ENCODE measurements at regions of chr9 and their contacts with region 1.

Region 1: DNA sequence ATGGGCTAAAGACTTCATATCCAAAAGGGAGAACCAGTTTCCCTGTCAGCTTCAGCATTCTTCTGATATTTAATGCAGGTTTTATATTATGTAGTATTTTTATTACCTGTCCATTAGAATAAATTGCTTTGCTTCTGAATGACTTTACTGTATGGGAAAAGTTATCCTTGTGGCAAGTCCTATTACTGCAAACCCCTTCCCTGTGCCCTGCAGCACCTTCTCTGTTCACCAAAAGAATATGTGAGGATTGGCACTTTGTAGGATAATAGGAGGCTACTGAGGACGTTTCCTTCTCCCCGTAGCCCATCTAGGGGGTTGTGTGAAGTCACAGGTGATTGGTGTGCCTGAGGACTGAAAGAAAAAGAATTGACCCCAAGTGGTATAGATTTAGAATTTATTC is 296.1 kb downstream of the KDM4C start:
- DNase-seq: no peak
- H3K4me3 ChIP-seq: no peak overlapping the region
- H3K27ac ChIP-seq: no peak overlapping the region
- H3K4me1 ChIP-seq: peaks cover 0 to 20% (median 6%) of the 10 kb centered on the region in 4 experiments
- H3K27me3 ChIP-seq: no peaks in the 10 kb centered on the region

Region 2: DNA sequence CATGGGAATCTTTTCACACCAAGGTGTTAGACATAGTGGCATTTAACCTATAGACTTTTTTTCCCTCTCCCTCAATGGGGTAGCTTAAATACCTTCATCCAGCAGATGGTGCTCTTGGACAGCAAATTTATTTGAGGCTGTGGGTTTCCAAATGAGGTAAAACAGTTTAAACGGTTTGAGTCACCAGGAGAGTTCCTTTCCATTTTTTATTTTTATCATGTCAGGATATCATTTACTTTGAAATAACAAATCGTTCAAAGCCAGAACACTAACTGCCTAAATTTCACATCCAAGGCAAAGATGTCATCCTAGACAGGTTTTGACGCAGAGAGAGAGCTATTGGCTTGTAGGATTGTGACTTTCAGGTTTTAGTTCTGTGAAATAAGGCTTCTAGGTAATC is 226.5 kb before region 1 on chr9:
- CTCF ChIA-PET with region 1: interaction called, 13 read pairs
- POLR2A ChIA-PET with region 1: no interaction called
- DNase-seq: peak; percentile 61 to 82 (median 77)
- H3K4me3 ChIP-seq: no peak overlapping the region
- H3K27ac ChIP-seq: no peak overlapping the region
- H3K4me1 ChIP-seq: no peaks in the 10 kb centered on the region
- H3K27me3 ChIP-seq: no peaks in the 10 kb centered on the region

Region 3: DNA sequence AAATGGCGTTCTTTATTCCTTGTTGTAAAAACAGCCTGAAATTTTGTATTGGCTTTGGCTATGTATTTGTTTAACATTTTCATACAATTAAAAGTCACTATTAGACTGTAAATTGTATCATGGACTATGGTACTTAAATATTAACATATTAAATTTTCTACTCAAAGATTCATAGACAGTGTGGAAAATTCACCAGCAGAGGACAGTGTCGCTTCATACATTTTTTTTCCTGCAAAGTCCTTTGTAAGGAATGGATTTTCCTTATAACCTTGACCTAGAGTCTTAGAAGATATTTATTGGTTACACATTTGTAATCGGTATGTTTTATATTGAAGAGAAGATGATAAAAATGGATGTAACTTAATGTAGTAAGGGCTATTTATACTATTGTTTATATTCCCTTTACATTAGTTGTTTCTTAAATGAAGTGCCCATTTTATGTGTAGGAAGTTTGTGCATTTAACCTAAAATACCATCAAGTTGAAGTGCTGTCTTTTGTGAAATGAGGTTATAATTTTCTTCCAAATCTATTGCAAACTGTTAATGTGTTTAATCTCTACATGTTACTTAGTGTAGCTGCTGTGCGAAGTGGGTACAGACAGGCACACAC is 146.0 kb before region 1 on chr9:
- CTCF ChIA-PET with region 1: interaction called, 11 read pairs
- POLR2A ChIA-PET with region 1: no interaction called
- DNase-seq: peak in 2 of 3 donors; percentile 37 to 54
- H3K4me3 ChIP-seq: no peak overlapping the region
- H3K27ac ChIP-seq: no peak overlapping the region
- H3K4me1 ChIP-seq: peaks cover 0 to 7% (median 2%) of the 10 kb centered on the region in 4 experiments
- H3K27me3 ChIP-seq: no peaks in the 10 kb centered on the region

Region 4: GRCh38 chr9:6944093-6944551 is 109.8 kb before region 1 on chr9:
- CTCF ChIA-PET with region 1: interaction called, 11 read pairs
- POLR2A ChIA-PET with region 1: no interaction called
- DNase-seq: peak; percentile 34 to 79 (median 71)
- H3K4me3 ChIP-seq: no peak overlapping the region
- H3K27ac ChIP-seq: no peak overlapping the region
- H3K4me1 ChIP-seq: peaks cover 9 to 20% (median 16%) of the 10 kb centered on the region in 4 experiments
- H3K27me3 ChIP-seq: no peaks in the 10 kb centered on the region

Region 5: DNA sequence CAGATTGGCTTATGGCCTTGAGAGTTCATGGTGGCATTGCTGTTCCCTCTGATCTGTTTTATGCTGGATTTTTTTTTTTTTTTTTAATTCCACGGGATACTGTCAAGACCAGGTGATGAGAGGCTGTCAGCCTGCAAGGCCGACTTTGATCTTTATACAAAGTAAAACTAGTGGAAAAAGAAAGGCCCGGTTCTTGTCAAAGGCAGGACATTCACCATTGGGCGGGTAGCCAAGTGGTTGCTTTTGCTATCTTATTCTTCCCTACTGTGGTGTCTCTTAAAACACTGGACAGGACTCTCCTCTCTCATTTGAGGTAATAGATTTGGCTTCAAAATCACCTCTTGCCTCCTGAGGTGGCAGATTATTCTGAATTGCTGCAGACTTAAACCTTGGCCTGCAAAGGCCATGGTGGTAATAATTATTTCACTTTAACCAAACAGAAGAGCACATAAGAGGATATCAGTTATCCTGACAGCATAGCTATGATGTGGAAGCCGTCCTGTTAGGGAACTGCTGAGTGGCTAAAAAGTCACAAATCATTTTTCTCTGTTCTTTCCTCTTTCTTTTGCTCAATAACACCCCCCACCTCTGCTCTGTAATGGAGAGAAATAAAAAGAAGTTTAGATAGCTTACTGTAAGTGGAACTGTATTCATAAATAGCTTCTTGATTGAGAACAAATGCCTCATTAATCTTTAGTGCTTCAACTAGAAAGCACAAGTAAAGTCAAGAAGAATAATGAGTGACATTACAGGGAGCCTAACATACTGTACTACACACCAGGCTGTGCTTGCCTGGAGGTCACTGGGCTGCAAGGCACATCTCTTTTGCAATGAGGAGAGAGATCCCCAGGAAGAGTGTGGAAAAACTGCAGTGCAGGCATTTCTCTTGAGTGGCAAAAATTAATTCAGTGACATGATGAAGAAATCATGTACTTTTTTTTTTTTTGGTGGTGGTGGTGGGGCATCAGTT is 20.5 kb before region 1 on chr9:
- CTCF ChIA-PET with region 1: interaction called, 16 read pairs
- POLR2A ChIA-PET with region 1: no interaction called
- DNase-seq: peak in 1 of 3 donors; percentile 13
- H3K4me3 ChIP-seq: no peak overlapping the region
- H3K27ac ChIP-seq: no peak overlapping the region
- H3K4me1 ChIP-seq: peaks cover 0 to 7% (median 0%) of the 10 kb centered on the region in 4 experiments
- H3K27me3 ChIP-seq: no peaks in the 10 kb centered on the region